Transverse colon (tissue), 4 donors: ENCODE measurements at regions of chr4 and their contacts with region 1.

Region 1: GRCh38 chr4:39205000-39205399 is 22.7 kb downstream of the WDR19 start:
- DNase-seq: no peak
- H3K4me3 ChIP-seq: no peak overlapping the region
- H3K27ac ChIP-seq: no peak overlapping the region
- H3K4me1 ChIP-seq: no peaks in the 10 kb centered on the region
- H3K27me3 ChIP-seq: no peaks in the 10 kb centered on the region
- CTCF ChIP-seq: no peak
- EP300 ChIP-seq: no peak
- POLR2A ChIP-seq: no peak

Region 2: DNA sequence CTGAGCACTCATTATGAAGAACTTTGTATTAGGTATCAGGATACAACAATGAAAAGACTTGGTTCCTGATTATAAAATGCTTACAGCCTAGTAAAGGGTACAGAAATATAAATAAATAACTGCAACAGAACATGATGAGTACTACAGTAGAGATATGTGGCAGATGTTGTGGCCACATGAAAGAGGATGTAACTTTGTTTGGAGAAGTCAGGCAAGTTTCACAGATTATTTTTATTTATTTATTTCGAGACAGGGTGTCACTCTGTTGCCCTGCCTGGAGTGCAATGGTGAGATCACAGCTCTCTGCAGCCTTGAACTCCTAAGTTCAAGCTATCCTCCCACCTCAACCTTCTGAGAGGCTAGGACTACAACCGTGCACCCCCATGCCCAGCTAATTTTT is 477.1 kb after region 1 on chr4:
- in situ Hi-C with region 1: no loop called
- intact Hi-C with region 1: loop called (anchors 5 kb)
- DNase-seq: no peak
- H3K4me3 ChIP-seq: no peak overlapping the region
- H3K27ac ChIP-seq: no peak overlapping the region
- H3K4me1 ChIP-seq: peaks cover 0 to 4% (median under 1%) of the 10 kb centered on the region in 4 donors
- H3K27me3 ChIP-seq: no peaks in the 10 kb centered on the region
- CTCF ChIP-seq: no peak
- EP300 ChIP-seq: no peak
- POLR2A ChIP-seq: no peak